PC-9 (cell line): ENCODE measurements at regions of chr3 and their contacts with region 1.

Region 1: DNA sequence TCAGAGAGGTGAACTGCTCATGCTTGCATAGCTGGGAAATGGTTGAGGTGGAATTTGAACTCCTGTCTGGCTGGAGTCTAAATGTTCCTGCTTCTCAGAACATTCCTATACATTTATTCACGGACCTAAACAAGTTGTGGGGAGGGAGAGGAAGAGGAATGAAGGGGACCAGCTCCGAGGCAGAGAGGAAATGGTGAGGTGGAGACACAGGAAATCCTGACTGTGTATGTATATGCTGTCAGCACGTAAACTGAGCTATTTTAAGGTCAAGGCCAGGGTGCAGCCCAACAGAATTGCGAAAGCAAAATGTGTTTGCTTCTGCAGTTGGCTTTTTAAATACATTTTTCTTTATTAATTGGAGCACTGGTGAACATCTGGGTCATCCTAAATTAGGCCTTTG is 74.1 kb upstream of the POMGNT2 start:
- DNase-seq: peak; percentile 30 to 91
- H3K4me3 ChIP-seq: no peak overlapping the region
- H3K27ac ChIP-seq: peak overlapping the region; percentile 99
- H3K4me1 ChIP-seq: peaks cover 68% of the 10 kb centered on the region
- H3K27me3 ChIP-seq: no peaks in the 10 kb centered on the region
- CTCF ChIP-seq: no peak

Region 2: GRCh38 chr3:43286115-43286840 is 106.3 kb after region 1 on chr3 and contains the start of gene SNRK:
- CTCF ChIA-PET with region 1: no interaction called
- POLR2A ChIA-PET with region 1: no interaction called
- intact Hi-C with region 1: loop called (anchors 1 kb)
- DNase-seq: peak; percentile 64 to 91
- H3K4me3 ChIP-seq: peak within 1 kb of the TSS; percentile 83
- H3K27ac ChIP-seq: peak within 1 kb of the TSS; percentile 47
- H3K4me1 ChIP-seq: peaks cover 30% of the 10 kb centered on the region
- H3K27me3 ChIP-seq: no peaks in the 10 kb centered on the region
- CTCF ChIP-seq: no peak; the same call in 1 of the 2 replicates
- total RNA-seq, gene SNRK: 14.3 and 14.4 TPM in 2 replicates